ENCODE measurements at regions of chr2 and their contacts with region 1.

Region 1: DNA sequence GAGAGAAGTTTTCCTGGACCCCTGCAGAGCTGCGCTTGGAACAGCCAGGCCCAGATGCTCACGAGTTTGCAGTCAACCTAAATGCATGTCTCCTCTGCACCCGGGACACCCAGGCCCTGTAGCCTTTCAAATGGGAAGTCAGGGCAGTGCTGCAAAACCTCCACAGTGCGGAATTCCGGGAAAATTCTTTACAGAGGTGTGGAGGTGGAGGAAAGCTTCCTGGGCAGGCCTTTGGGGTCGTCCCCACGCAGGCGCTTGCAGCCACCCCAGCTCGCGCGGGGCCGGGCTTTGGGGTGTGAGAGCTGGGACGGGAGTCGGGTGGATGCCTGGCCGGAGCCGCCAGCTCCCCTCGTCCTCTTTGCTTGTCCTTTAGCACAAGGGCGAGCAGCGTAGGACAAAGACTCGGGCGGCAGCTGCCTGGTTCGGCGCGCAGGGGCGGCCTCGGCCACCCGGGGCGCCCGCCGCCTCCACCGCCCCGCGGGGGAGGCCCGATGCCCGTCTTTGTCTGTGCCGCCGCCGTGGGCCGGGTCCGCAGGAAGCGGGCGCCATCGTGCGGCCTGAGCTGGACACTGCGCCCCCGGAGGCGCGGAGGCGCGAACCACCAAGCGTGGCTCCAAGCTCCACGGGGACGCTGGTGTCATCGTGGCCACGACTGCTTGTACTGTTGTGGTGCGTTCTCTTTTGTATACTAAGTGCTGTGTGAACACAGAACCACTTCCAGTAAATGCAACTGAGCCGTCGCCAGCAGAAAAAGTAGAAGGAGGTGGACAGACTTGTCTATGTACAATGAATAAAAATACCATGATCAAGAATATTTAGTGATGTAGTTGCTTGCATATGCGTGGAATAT is 28.2 kb upstream of the BCL11A start:
- DNase-seq: peak; percentile 63 to 74 (median 65)
- H3K4me3 ChIP-seq: peak overlapping the region; percentile 45 to 73 (median 46)
- H3K4me3 Mint-ChIP-seq: peak overlapping the region; percentile 67 to 88
- H3K27ac ChIP-seq: no peak overlapping the region
- H3K27ac Mint-ChIP-seq: no peak overlapping the region
- H3K4me1 ChIP-seq: peaks cover 5 to 9% of the 10 kb centered on the region in 2 donors
- H3K4me1 Mint-ChIP-seq: peaks cover 7% of the 10 kb centered on the region
- H3K27me3 ChIP-seq: peaks cover 0 to 11% of the 10 kb centered on the region in 2 donors
- H3K27me3 Mint-ChIP-seq: peaks cover 1 to 10% (median 6%) of the 10 kb centered on the region in 3 donors
- CTCF ChIP-seq: peak; percentile 98

Region 2: DNA sequence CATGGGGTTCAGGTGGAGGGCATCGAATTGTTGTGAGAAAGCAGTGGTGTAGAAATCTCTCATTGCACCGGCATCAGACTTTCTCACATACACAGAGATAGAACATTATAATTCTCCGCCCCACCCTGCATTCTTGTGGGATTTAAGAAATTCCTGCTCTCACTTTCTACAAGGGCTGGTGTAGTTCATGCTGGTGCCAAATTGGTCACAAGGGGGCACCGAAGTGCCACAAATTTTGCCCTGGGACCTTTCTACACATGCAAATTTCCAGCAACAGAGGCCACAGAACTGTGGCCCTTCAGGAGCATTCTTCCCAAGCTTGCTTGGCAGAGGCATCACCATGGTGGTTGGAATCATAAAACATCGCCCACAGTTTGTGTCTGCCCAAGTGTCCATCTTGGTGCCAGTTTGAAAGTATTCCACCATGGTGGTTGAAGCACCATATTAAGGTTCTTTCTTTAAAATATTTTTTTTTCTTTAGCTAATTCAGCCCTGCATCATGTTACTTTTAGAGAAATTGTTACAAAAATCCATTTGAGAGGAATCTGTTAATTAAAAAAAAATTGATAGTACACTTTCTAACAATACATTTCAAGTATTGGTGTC is 1819.4 kb before region 1 on chr2:
- intact Hi-C with region 1: loop called (anchors 5 kb)
- DNase-seq: peak; percentile 15 to 38 (median 29)
- H3K4me3 ChIP-seq: no peak overlapping the region
- H3K4me3 Mint-ChIP-seq: no peak overlapping the region
- H3K27ac ChIP-seq: no peak overlapping the region
- H3K27ac Mint-ChIP-seq: no peak overlapping the region
- H3K4me1 ChIP-seq: no peaks in the 10 kb centered on the region
- H3K4me1 Mint-ChIP-seq: peaks cover 15% of the 10 kb centered on the region
- H3K27me3 ChIP-seq: no peaks in the 10 kb centered on the region
- H3K27me3 Mint-ChIP-seq: peaks cover 0 to 2% (median 0%) of the 10 kb centered on the region in 3 donors
- CTCF ChIP-seq: peak; percentile 73

Region 3: DNA sequence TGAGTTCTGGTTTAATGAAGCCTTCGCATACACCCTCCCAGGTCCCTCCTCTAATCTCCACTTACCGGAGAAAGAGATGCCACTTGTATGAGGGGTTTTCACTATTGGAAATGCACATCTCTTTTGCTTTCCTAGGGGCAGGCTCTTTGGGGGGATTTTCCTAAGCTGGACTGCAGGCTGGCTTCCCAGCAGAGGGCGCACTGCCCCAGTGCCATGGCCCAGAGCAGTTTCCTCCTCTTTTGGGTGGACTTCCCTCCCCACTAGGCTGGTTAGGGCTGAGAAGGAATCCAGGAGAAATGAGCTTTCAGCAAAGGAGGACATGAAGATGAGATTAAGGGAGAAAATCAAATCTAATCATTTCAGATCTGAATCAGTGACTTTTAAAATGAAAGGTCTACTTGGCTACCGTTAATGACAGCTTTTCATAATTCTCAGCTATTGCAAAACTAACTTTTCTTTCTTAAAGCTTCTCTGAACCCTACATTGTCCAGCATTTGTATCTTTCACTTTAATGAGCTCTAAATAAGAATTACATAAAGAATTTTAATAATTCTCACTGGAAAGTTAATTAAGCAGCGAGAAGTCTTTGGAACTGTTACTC is 1556.4 kb before region 1 on chr2:
- intact Hi-C with region 1: loop called (anchors 5 to 10 kb)
- DNase-seq: peak; percentile 24 to 46 (median 37)
- H3K4me3 ChIP-seq: no peak overlapping the region
- H3K4me3 Mint-ChIP-seq: peak overlapping the region in 1 of 2 donors; percentile 73
- H3K27ac ChIP-seq: no peak overlapping the region
- H3K27ac Mint-ChIP-seq: no peak overlapping the region
- H3K4me1 ChIP-seq: peaks cover 0 to 3% of the 10 kb centered on the region in 2 donors
- H3K4me1 Mint-ChIP-seq: peaks cover 5% of the 10 kb centered on the region
- H3K27me3 ChIP-seq: no peaks in the 10 kb centered on the region
- H3K27me3 Mint-ChIP-seq: peaks cover 0 to 2% (median 0%) of the 10 kb centered on the region in 3 donors
- CTCF ChIP-seq: peak; percentile 87

Region 4: GRCh38 chr2:59301466-59302402 is 1279.9 kb before region 1 on chr2:
- intact Hi-C with region 1: loop called (anchors 5 to 10 kb)
- DNase-seq: peak; percentile 51 to 67 (median 65)
- H3K4me3 ChIP-seq: no peak overlapping the region
- H3K4me3 Mint-ChIP-seq: no peak overlapping the region
- H3K27ac ChIP-seq: no peak overlapping the region
- H3K27ac Mint-ChIP-seq: no peak overlapping the region
- H3K4me1 ChIP-seq: no peaks in the 10 kb centered on the region
- H3K4me1 Mint-ChIP-seq: no peaks in the 10 kb centered on the region
- H3K27me3 ChIP-seq: no peaks in the 10 kb centered on the region
- H3K27me3 Mint-ChIP-seq: peaks cover 0 to 4% (median 0%) of the 10 kb centered on the region in 3 donors
- CTCF ChIP-seq: peak; percentile 78

Region 5: GRCh38 chr2:60463249-60463648 is 118.4 kb before region 1 on chr2:
- intact Hi-C with region 1: no loop called
- DNase-seq: no peak
- H3K4me3 ChIP-seq: no peak overlapping the region
- H3K4me3 Mint-ChIP-seq: no peak overlapping the region
- H3K27ac ChIP-seq: peak overlapping the region; percentile 19 to 30
- H3K27ac Mint-ChIP-seq: peak overlapping the region in 4 of 7 donors; percentile 19 to 84 (median 51)
- H3K4me1 ChIP-seq: peaks cover 17 to 24% of the 10 kb centered on the region in 2 donors
- H3K4me1 Mint-ChIP-seq: peaks cover 34% of the 10 kb centered on the region
- H3K27me3 ChIP-seq: no peaks in the 10 kb centered on the region
- H3K27me3 Mint-ChIP-seq: no peaks in the 10 kb centered on the region
- CTCF ChIP-seq: no peak